Activated naive CD4-positive, alpha-beta T cell treated with anti-CD3 and anti-CD28 coated beads for 36 hours (primary cell): ENCODE measurements at regions of chr3 and their contacts with region 1.

Region 1: DNA sequence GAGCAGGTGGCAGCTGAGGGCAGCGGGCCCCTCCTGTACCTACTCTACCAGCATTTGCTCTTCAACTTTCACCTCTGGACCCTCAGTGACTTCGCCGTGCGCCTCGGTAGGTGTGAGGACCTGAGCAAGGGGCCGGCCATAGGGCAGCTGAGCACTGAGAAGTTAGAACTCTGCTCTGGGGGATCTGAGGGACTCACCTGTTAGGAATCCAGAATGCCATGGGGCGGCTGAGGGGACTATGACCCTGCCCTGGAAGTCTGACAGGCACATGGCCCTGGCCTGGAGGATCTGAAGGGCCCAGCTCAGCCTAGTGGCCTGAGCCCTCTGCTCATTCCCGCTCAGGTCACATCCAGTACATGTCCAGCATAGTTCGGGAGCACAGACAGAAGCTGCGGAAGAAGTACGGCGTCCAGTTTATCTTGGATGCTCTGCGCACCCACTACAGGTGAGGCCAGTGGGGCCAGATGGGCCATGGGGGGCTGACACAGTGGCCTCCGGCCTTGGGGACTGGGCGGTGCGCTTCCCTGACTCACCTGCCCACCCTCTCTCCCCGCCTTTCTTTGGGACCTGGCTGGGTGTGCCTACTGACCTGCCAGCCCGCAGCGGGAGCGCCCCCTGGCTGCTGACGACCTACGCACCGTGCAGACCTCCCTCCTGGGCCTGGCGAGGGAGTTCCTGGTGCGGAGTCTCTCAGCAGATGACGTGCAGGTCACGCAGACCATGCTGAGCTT is 18.8 kb downstream of the NBEAL2 start:
- DNase-seq: peak; percentile 81
- H3K4me3 Mint-ChIP-seq: no peak overlapping the region
- H3K27ac Mint-ChIP-seq: no peak overlapping the region
- H3K4me1 Mint-ChIP-seq: peaks cover 1% of the 10 kb centered on the region
- H3K27me3 Mint-ChIP-seq: no peaks in the 10 kb centered on the region

Region 2: DNA sequence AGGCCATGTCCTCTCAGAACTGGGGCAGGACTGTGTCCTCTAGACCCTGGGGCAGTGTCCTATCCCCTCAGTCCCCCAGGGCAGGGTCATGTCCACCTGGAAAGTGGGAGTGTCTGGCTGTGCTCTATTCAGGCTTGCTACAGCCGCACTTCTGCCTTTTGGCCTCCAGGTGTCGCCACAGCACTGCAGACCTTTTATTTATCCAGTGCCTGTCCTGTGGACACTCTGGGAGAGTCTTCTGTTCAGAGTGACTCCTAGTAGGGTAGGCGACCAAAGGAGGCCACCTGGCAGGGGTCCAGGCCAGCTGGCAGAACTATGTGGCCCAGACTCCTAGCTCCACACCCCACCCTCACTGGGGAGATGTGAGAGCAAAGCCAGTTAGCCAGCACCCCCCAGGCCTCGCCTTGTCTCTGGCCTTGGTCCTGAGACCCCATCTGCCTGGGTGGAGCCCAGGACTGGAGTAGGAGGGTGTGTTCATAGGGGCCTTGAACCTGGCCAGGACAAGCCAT is 293.2 kb before region 1 on chr3:
- CTCF ChIA-PET with region 1: no interaction called
- intact Hi-C with region 1: loop called (anchors 5 kb)
- DNase-seq: peak; percentile 81
- H3K4me3 Mint-ChIP-seq: no peak overlapping the region
- H3K27ac Mint-ChIP-seq: no peak overlapping the region
- H3K4me1 Mint-ChIP-seq: peaks cover 10% of the 10 kb centered on the region
- H3K27me3 Mint-ChIP-seq: no peaks in the 10 kb centered on the region

Region 3: DNA sequence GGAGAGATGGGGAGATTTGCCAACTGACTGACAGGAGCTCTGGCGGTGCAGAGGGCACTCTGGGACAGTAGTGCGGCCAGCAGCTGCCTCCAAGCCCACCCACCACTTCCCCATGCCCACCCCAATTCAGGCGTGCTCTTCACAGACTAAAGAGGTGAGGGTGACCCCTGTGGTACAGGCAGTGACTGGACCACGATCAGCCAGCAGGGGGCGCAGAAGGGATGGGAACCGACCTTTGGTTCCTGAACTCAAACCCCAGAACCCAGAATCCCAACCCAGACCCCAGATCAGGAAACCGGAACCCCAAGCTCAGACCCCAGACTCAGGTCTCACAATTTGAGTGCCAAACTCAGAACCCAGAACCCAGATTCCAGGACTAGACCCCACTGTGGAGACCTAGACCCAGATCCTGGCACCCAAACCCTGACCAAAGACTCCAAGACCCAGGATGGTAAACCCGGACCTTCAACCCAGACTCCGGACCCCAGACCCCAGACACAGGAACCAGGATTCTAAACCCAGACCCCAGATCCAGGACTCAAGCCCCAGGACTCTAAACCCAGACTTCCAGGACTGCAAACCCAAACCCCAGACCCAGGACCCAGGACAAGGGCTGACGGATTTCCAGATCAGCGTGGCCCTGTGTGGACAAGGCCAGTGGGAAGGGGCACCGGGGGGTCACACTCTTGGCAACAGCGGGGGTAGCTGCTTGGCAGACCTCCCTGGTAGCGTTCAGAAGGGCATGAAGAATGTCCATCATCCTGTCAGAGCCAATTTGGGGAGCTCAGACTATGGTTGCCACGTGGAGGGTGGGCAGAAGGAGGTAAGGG is 131.4 kb before region 1 on chr3:
- CTCF ChIA-PET with region 1: interaction called, 5 read pairs
- intact Hi-C with region 1: loop called (anchors 1 kb)
- DNase-seq: peak; percentile 84
- H3K4me3 Mint-ChIP-seq: no peak overlapping the region
- H3K27ac Mint-ChIP-seq: no peak overlapping the region
- H3K4me1 Mint-ChIP-seq: no peaks in the 10 kb centered on the region
- H3K27me3 Mint-ChIP-seq: no peaks in the 10 kb centered on the region

Region 4: DNA sequence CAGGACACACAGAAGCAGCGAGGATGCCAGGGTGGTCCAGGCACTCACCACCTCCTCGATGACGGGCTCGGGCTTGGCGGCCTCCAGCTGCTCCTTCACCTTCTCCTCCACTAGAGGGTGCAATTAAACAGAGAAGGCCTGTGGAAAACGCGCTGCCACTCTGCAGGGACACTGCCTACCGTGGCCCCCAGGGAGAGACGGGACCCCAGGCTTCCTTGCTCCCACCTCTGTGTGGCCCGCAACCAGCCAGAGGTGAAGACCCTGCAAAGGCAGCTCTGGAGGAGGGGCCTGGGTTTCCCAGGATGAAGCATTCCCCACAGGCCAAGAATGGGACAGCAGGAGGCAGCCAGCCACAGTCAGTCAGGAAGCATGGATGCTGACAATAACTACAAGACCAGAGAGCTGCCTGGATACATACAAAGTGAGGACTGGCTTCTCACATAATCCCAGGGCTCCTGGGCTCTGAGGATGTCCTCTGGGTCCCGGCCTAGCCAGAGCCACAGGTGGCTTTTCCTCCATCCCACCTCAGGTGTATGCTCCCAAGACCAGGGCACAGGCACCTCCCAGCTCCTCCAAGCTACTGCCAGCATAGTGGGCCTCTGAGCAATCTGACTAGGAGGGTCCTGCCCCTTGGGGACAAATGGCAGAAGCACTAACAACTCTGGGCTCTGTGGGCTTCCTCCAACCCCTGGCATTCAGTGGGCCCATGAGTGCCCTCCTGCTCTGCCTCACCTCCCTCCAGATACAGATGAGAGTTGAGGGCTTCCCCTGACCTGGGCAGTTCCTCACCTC is 74.5 kb before region 1 on chr3:
- CTCF ChIA-PET with region 1: interaction called, 15 read pairs
- intact Hi-C with region 1: loop called (anchors 1 kb)
- DNase-seq: peak; percentile 53
- H3K4me3 Mint-ChIP-seq: no peak overlapping the region
- H3K27ac Mint-ChIP-seq: peak overlapping the region; percentile 24
- H3K4me1 Mint-ChIP-seq: peaks cover 22% of the 10 kb centered on the region
- H3K27me3 Mint-ChIP-seq: no peaks in the 10 kb centered on the region

Region 5: GRCh38 chr3:46959161-46959511 is 39.1 kb before region 1 on chr3:
- CTCF ChIA-PET with region 1: interaction called, 10 read pairs
- intact Hi-C with region 1: no loop called
- DNase-seq: peak; percentile 65
- H3K4me3 Mint-ChIP-seq: no peak overlapping the region
- H3K27ac Mint-ChIP-seq: peak overlapping the region; percentile 92
- H3K4me1 Mint-ChIP-seq: peaks cover 84% of the 10 kb centered on the region
- H3K27me3 Mint-ChIP-seq: no peaks in the 10 kb centered on the region

Region 6: DNA sequence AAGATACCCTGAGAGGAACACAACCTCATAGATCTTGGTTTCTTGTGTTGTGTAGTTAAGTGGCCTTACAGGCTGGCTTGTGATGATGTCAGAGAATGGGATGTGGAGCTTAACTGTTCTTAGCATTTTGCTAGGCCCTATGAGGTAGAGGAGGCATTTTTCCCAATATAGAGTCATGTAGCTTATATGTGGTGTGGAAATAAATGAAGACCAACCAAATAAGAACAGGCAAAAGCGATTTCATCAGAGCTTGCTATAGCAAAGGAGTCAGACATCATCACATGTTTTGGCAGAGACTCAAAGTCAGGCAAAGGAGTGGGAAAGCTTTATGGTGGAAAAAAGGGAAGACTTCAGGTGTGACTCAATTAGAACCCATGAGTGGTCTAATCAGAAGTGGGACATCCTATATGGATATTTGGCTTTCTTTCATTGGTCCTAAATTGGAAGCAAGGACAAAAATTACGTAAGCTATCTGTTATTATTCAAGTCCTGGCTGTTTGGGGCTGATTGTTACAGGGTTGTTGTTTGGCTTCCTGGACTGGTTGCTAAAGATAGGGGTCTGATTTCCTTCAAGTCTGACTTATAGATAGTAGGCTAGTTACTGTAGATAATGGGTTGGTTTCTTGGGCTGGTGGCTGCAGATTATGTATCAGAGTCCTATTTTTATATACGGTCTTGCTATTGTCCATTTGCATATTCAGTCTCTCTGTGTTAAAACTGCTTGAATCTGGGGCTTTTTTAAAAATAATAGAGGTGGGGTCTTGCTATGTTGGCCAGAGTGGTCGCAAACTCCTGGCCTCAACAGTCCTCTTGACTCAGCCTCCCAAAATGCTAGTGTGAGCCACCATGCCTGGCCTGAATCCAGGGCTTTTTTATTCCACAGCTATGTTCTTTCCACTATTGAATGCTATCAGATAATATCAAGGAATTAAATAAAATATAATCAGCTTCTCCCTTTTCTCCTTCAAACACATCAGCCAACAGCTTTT is 195.9 kb after region 1 on chr3:
- CTCF ChIA-PET with region 1: no interaction called
- intact Hi-C with region 1: no loop called
- DNase-seq: no peak
- H3K4me3 Mint-ChIP-seq: no peak overlapping the region
- H3K27ac Mint-ChIP-seq: no peak overlapping the region
- H3K4me1 Mint-ChIP-seq: no peaks in the 10 kb centered on the region
- H3K27me3 Mint-ChIP-seq: no peaks in the 10 kb centered on the region

Region 7: GRCh38 chr3:47324278-47324865 is 326.1 kb after region 1 on chr3:
- CTCF ChIA-PET with region 1: no interaction called
- intact Hi-C with region 1: loop called (anchors 5 kb)
- DNase-seq: peak; percentile 66
- H3K4me3 Mint-ChIP-seq: no peak overlapping the region
- H3K27ac Mint-ChIP-seq: no peak overlapping the region
- H3K4me1 Mint-ChIP-seq: no peaks in the 10 kb centered on the region
- H3K27me3 Mint-ChIP-seq: no peaks in the 10 kb centered on the region